B cell (primary cell): ENCODE measurements at regions of chr2 and their contacts with region 1.

Region 1: DNA sequence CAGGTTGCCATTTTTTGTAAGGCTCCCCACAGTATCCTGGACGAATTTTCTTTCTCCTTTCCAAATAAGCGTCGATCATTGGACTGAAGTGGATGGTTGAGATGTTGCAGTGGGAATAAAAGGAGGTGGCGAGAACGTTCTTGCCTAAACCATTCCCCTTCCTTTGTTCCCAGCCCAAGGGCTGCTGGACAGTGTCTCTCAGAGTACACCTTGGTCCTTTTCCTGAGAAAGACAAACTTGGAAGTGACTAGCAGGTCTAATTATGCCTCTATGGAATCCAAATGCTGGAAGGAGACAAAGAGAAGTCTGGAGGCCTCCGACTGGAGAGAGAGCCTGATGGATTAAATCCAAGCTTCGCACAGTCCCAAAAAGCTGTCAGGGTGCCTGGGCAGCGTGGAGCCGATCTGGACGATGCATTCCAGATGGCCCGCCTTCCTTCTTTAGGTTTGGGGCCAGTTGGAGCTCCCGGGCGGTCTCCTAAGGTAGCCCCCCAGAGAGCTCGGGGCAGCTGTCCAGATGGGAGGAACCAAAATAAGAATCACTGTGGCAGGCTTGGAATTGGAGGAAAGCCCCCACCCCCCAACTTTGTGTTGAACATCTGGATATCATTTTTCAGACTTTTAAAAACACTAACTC is 186.8 kb downstream of the TMEM247 start:
- DNase-seq: no peak
- ATAC-seq: no peak
- H3K4me3 ChIP-seq: no peak overlapping the region
- H3K4me3 Mint-ChIP-seq: no peak overlapping the region
- H3K27ac ChIP-seq: no peak overlapping the region
- H3K27ac Mint-ChIP-seq: no peak overlapping the region
- H3K4me1 ChIP-seq: no peaks in the 10 kb centered on the region
- H3K4me1 Mint-ChIP-seq: no peaks in the 10 kb centered on the region
- H3K27me3 ChIP-seq: peaks cover 0 to 9% (median 0%) of the 10 kb centered on the region in 4 experiments
- H3K27me3 Mint-ChIP-seq: peaks cover 11% of the 10 kb centered on the region
- CTCF ChIP-seq: no peak

Region 2: GRCh38 chr2:45391866-45392265 is 1274.3 kb before region 1 on chr2:
- CTCF ChIA-PET with region 1: no interaction called
- POLR2A ChIA-PET with region 1: no interaction called
- intact Hi-C with region 1: loop called (anchors 10 kb)
- DNase-seq: no peak
- ATAC-seq: no peak
- H3K4me3 ChIP-seq: no peak overlapping the region
- H3K4me3 Mint-ChIP-seq: no peak overlapping the region
- H3K27ac ChIP-seq: no peak overlapping the region
- H3K27ac Mint-ChIP-seq: no peak overlapping the region
- H3K4me1 ChIP-seq: no peaks in the 10 kb centered on the region
- H3K4me1 Mint-ChIP-seq: no peaks in the 10 kb centered on the region
- H3K27me3 ChIP-seq: no peaks in the 10 kb centered on the region
- H3K27me3 Mint-ChIP-seq: no peaks in the 10 kb centered on the region
- CTCF ChIP-seq: no peak

Region 3: DNA sequence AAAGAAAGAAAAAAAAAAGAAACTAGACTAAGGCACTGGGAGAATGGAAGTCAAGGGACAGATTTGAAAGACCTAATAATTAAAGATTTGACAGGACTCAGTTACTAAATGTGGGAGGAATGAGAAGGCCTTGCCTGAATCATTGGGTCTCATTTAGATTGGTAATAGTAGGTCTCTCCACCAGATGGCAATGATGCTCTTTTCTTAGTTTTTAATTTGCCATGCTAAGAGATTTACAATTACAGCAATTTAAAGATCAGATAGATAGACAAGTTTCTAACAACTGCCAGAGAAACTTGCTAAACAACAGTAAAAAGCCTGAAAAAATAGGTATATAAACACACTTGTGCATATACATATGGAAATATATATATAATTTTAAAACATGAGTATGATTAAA is 33.8 kb before region 1 on chr2:
- CTCF ChIA-PET with region 1: no interaction called
- POLR2A ChIA-PET with region 1: no interaction called
- intact Hi-C with region 1: no loop called
- DNase-seq: peak; percentile 44
- ATAC-seq: no peak
- H3K4me3 ChIP-seq: no peak overlapping the region
- H3K4me3 Mint-ChIP-seq: no peak overlapping the region
- H3K27ac ChIP-seq: no peak overlapping the region
- H3K27ac Mint-ChIP-seq: no peak overlapping the region
- H3K4me1 ChIP-seq: no peaks in the 10 kb centered on the region
- H3K4me1 Mint-ChIP-seq: peaks cover 7% of the 10 kb centered on the region
- H3K27me3 ChIP-seq: no peaks in the 10 kb centered on the region
- H3K27me3 Mint-ChIP-seq: no peaks in the 10 kb centered on the region
- CTCF ChIP-seq: peak; percentile 61

Region 4: GRCh38 chr2:46720592-46721185 is 54.5 kb after region 1 on chr2:
- CTCF ChIA-PET with region 1: no interaction called
- POLR2A ChIA-PET with region 1: no interaction called
- intact Hi-C with region 1: loop called (anchors 10 kb)
- DNase-seq: no peak
- ATAC-seq: no peak
- H3K4me3 ChIP-seq: no peak overlapping the region
- H3K4me3 Mint-ChIP-seq: peak overlapping the region; percentile 20
- H3K27ac ChIP-seq: peak overlapping the region in 1 of 2 donors; percentile 58
- H3K27ac Mint-ChIP-seq: no peak overlapping the region
- H3K4me1 ChIP-seq: peaks cover 17 to 69% of the 10 kb centered on the region in 2 donors
- H3K4me1 Mint-ChIP-seq: peaks cover 83% of the 10 kb centered on the region
- H3K27me3 ChIP-seq: no peaks in the 10 kb centered on the region
- H3K27me3 Mint-ChIP-seq: no peaks in the 10 kb centered on the region
- CTCF ChIP-seq: no peak